ENCODE measurements at regions of chr7 and their contacts with region 1.

Region 1: GRCh38 chr7:106461993-106462859 is 177.4 kb upstream of the NAMPT start:
- H3K4me3 Mint-ChIP-seq: no peak overlapping the region
- H3K27ac Mint-ChIP-seq: no peak overlapping the region
- H3K4me1 Mint-ChIP-seq: peaks cover 14% of the 10 kb centered on the region
- H3K27me3 Mint-ChIP-seq: no peaks in the 10 kb centered on the region

Region 2: GRCh38 chr7:105664816-105665525 is 797.3 kb before region 1 on chr7:
- intact Hi-C with region 1: no loop called
- H3K4me3 Mint-ChIP-seq: no peak overlapping the region
- H3K27ac Mint-ChIP-seq: no peak overlapping the region
- H3K4me1 Mint-ChIP-seq: peaks cover 8% of the 10 kb centered on the region
- H3K27me3 Mint-ChIP-seq: no peaks in the 10 kb centered on the region

Region 3: GRCh38 chr7:106176414-106177299 is 285.6 kb before region 1 on chr7:
- intact Hi-C with region 1: loop called (anchors 1 kb)
- H3K4me3 Mint-ChIP-seq: peak overlapping the region; percentile 26
- H3K27ac Mint-ChIP-seq: no peak overlapping the region
- H3K4me1 Mint-ChIP-seq: peaks cover 9% of the 10 kb centered on the region
- H3K27me3 Mint-ChIP-seq: peaks cover 33% of the 10 kb centered on the region

Measured in dendritic cell treated with granulocyte-macrophage colony-stimulating factor and Interleukin-4, amounts not matched to agents 40 ng/mL and 50 ng/mL, for 4 days (primary cell).